ENCODE measurements at regions of chr3 and their contacts with region 1.

Region 1: DNA sequence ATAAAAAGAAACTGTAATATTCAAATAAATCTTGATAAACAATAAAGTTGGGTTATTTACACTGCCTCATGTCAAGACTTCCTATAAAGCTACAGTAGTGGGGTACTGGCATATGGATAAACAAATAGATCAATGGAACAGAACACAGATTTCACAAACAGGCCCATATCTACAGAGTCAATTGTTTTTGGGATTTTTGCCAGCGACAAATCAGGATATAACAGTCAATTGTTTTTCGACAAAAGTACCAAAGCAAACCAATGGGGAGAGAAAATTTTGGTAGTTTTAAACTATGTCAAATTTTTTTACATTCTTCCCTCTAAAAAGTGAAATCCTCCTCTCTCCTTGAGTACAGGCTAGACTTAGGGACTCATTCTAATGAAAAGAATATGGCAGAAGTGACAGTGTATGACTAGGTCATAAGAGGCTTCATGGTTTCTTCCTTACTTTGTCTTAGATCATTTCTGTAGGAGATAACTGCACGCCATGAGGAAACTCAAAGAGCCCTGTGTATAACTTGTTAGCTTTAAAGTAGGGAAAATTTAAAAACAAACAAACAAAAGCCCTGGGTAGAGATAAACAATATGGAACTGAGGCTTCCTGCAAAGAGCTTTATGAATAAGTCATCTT is 16.9 kb downstream of the IP6K1 start:
- DNase-seq: no peak
- ATAC-seq: no peak
- H3K4me3 Mint-ChIP-seq: no peak overlapping the region
- H3K27ac Mint-ChIP-seq: no peak overlapping the region
- H3K4me1 Mint-ChIP-seq: no peaks in the 10 kb centered on the region
- H3K27me3 Mint-ChIP-seq: no peaks in the 10 kb centered on the region

Region 2: DNA sequence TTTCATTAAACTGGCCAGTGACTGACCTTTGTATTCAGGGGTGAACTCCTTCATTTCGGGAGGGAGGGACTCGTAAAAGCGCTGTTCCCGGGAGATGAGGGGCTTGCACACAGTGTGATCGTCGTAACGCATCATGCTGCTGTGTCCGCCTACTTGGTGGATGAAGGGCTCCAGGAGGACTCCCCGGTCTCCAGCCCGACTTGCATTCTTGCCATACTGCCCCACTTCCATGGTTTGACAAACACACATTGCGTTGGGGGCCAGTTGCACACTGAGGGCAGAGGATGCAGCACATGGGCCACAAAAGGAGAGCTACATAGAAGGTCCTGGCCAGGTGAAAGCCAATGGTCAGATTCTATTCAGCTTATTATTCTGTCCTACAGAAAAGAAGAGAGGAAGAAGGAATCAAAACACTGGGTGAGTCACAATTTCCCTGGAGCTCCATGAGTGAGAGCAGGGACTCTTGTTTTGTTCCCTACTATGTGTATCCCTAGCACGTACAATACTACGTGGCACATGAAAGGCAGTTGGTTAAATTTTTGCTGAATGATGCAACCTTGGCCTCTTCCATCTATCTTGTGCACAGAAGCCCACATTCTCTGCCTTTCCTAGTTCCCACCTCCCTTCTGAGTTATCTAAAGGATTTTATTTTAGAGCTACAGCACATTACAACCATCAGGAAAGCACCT is 21.5 kb before region 1 on chr3:
- POLR2A ChIA-PET with region 1: no interaction called
- DNase-seq: no peak
- ATAC-seq: no peak
- H3K4me3 Mint-ChIP-seq: no peak overlapping the region
- H3K27ac Mint-ChIP-seq: no peak overlapping the region
- H3K4me1 Mint-ChIP-seq: no peaks in the 10 kb centered on the region
- H3K27me3 Mint-ChIP-seq: no peaks in the 10 kb centered on the region

Region 3: DNA sequence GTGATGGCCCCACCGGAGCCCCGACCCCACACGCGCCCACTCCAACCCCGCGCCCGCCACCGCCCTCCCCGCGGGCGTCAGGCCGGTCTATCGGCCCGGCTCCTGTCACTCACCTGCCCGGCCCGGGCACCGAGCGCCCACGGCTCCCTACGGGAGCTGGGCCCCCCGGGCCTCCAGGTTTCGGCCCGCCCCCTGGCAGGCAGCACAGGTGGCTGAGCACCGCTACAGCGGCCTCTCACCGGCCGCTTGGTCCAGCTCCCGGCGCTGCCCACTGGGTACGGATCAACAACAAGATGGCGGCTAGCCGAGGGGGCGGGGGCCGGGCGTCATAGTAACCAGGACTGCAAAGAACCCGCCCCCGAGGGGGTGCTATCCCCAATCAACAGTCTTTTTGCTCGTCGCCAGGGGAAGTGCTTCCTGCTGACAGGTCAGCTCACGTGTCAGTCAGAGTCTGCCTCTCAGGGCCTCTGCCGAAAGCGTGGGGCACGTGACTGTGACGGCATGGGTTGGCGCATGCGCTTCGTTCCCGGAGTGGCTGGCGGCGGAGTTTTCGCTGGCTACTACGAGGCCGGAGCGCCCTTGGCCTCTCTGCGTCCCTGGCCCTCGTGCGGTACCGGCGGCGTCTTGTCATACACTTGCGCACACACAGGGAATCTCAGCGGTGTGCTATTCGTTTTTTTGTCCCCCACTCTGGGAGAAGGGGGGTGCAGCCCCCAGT is 17.0 kb after region 1 on chr3 and contains the start of gene IP6K1:
- POLR2A ChIA-PET with region 1: interaction called, 13 read pairs
- DNase-seq: peak; percentile 96
- ATAC-seq: peak; percentile 99
- H3K4me3 Mint-ChIP-seq: peak within 1 kb of the TSS; percentile 91
- H3K27ac Mint-ChIP-seq: peak within 1 kb of the TSS; percentile 90
- H3K4me1 Mint-ChIP-seq: peaks cover 23% of the 10 kb centered on the region
- H3K27me3 Mint-ChIP-seq: peaks cover 4% of the 10 kb centered on the region
- total RNA-seq, gene IP6K1: 35.2 to 40.2 TPM